ENCODE measurements at regions of chr22 and their contacts with region 1.

Region 1: GRCh38 chr22:20562461-20563247 is 55.2 kb downstream of the MED15 start:
- DNase-seq: no peak
- H3K4me3 ChIP-seq: no peak overlapping the region
- H3K27ac ChIP-seq: no peak overlapping the region
- H3K4me1 ChIP-seq: no peaks in the 10 kb centered on the region
- H3K27me3 ChIP-seq: no peaks in the 10 kb centered on the region
- CTCF ChIP-seq: no peak
- POLR2A ChIP-seq: no peak

Region 2: DNA sequence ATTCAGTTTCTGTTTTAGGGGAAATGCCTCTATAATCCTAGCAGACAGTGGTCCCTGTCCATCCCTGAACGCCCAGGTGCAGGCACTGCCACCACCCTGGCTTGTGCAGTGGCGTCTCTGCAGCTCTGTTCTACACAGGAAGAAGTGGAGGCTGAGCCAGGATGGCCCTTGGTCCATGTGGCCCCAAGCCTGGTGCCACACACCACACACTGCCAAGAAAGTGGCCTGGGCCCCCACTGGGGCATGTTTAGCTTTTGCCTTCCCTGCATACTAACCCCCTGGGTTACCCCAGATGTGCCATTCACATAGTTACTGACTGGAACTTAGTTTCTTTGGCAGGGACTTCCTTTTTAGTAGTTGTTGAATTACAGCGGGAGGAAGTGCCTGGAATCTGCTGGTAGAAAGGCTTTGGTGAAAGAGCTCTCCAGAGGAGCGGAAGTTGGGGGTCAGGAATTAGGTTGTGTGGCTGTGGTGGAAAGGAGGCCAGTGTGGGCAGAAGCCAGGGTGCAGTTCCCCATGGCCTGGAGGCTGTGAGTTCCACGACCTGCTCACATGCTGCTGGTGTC is 13.7 kb after region 1 on chr22:
- CTCF ChIA-PET with region 1: interaction called, 27 read pairs
- POLR2A ChIA-PET with region 1: no interaction called
- dilution Hi-C with region 1: no loop called
- intact Hi-C with region 1: no loop called
- DNase-seq: no peak
- H3K4me3 ChIP-seq: no peak overlapping the region
- H3K27ac ChIP-seq: no peak overlapping the region
- H3K4me1 ChIP-seq: no peaks in the 10 kb centered on the region
- H3K27me3 ChIP-seq: no peaks in the 10 kb centered on the region
- CTCF ChIP-seq: no peak
- POLR2A ChIP-seq: no peak